ENCODE measurements at regions of chrX and their contacts with region 1.

Region 1: GRCh38 chrX:110228453-110228852 is 89.4 kb downstream of the AMMECR1 start:
- DNase-seq: no peak
- ATAC-seq: no peak
- H3K4me3 ChIP-seq: no peak overlapping the region
- H3K27ac ChIP-seq: no peak overlapping the region
- H3K4me1 ChIP-seq: no peaks in the 10 kb centered on the region; the same call in 1 of the 2 replicates
- H3K27me3 ChIP-seq: no peaks in the 10 kb centered on the region
- CTCF ChIP-seq: no peak

Region 2: DNA sequence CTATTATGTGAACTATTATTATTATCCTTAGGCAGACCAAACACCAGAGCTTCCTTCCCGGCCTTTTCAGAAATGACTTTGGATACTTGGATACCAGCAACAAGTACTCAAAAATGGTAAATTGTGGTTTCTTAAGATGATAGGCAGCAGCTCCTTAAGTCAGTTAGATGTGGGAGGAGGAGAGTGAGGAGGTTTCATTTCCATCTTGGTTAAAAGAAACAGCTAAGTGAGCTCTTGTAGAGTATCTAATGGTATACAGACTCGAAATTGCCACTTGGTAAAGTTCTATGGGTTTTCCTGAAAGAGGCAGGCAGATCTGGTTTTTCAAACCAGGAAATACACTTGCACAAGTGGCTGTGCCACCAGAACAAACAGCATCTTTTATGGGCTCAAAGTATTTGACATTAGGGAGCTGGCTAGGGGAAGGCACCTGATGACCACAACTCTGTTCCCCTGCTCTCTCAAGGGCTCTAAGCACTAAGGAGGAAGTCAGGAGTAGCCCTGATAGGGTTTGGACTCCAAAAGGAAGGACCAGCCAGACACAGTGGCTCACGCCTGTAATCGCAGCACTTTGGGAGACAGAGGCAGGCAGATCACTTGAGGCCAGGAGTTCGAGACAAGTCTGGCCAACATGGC is 94.6 kb before region 1 on chrX:
- CTCF ChIA-PET with region 1: no interaction called
- POLR2A ChIA-PET with region 1: interaction called, 19 read pairs
- in situ Hi-C with region 1: no loop called
- intact Hi-C with region 1: no loop called
- DNase-seq: no peak
- ATAC-seq: no peak
- H3K4me3 ChIP-seq: no peak overlapping the region
- H3K27ac ChIP-seq: no peak overlapping the region
- H3K4me1 ChIP-seq: no peaks in the 10 kb centered on the region
- H3K27me3 ChIP-seq: no peaks in the 10 kb centered on the region
- CTCF ChIP-seq: no peak

Region 3: GRCh38 chrX:111145878-111146277 is 917.4 kb after region 1 on chrX:
- CTCF ChIA-PET with region 1: no interaction called
- POLR2A ChIA-PET with region 1: no interaction called
- in situ Hi-C with region 1: no loop called
- intact Hi-C with region 1: no loop called
- DNase-seq: no peak
- ATAC-seq: no peak
- H3K4me3 ChIP-seq: no peak overlapping the region
- H3K27ac ChIP-seq: no peak overlapping the region
- H3K4me1 ChIP-seq: no peaks in the 10 kb centered on the region
- H3K27me3 ChIP-seq: no peaks in the 10 kb centered on the region
- CTCF ChIP-seq: no peak